ENCODE measurements at regions of chr3 and their contacts with region 1.

Region 1: GRCh38 chr3:76131396-76132153 is 346.2 kb upstream of the ZNF717 start:
- DNase-seq: peak; percentile 51
- ATAC-seq: peak; percentile 64
- H3K4me3 ChIP-seq: no peak overlapping the region
- H3K27ac ChIP-seq: no peak overlapping the region
- H3K4me1 ChIP-seq: no peaks in the 10 kb centered on the region
- H3K27me3 ChIP-seq: no peaks in the 10 kb centered on the region
- CTCF ChIP-seq: no peak
- POLR2A ChIP-seq: no peak
- RAD21 ChIP-seq: no peak

Region 2: DNA sequence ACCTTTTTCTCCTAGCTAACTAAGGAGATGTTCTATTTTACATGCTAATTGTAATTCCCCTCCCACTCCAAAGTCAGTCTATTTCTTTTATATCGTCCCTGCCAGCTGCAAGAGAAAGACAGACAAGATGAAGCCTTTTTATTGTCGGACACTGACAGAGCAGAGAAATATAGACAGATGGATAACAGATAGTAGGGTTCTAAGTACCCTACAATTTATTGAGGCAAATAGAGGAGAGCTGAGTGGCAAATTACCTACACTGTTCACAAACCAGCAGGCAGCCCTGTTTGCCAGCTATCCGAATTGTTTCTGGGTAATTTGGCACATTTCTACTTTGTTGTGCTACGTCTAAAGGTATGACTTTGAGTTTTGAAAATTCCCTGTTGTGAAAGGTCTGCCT is 46.0 kb after region 1 on chr3:
- CTCF ChIA-PET with region 1: no interaction called
- POLR2A ChIA-PET with region 1: no interaction called
- dilution Hi-C with region 1: no loop called
- in situ Hi-C with region 1: no loop called
- intact Hi-C with region 1: no loop called
- DNase-seq: no peak
- ATAC-seq: no peak
- H3K4me3 ChIP-seq: no peak overlapping the region
- H3K27ac ChIP-seq: no peak overlapping the region
- H3K4me1 ChIP-seq: no peaks in the 10 kb centered on the region
- H3K27me3 ChIP-seq: no peaks in the 10 kb centered on the region
- CTCF ChIP-seq: no peak
- POLR2A ChIP-seq: no peak
- RAD21 ChIP-seq: no peak

Region 3: DNA sequence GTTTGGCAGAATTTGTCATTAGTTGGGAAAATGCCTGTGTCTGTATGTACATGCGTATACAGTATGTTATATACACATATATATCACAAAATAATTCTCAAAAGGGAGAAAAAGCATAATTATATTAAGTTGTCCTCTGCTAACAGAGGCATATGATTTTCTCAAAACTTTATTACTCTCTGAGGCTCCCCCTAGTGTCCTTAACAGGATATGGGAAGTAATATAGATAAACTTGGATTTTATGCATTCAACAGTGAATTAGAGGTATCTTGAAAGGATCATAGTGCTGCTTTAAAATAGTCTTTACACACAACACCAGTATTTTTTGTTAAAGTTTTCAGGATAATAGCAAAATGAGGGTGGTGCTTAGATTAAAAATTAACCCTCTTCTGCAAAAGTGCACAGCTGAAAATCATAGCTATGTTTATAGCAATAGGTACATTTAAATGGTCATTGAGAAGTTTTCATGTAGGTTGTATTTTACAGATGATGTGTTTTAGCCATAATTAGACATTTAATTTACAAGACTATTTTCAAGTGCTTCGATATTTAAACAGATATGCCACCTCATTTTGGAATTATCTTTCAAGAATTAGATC is 454.3 kb after region 1 on chr3:
- CTCF ChIA-PET with region 1: no interaction called
- POLR2A ChIA-PET with region 1: no interaction called
- dilution Hi-C with region 1: no loop called
- in situ Hi-C with region 1: no loop called
- intact Hi-C with region 1: loop called (anchors 5 kb)
- DNase-seq: peak; percentile 32
- ATAC-seq: peak; percentile 75
- H3K4me3 ChIP-seq: no peak overlapping the region
- H3K27ac ChIP-seq: no peak overlapping the region
- H3K4me1 ChIP-seq: no peaks in the 10 kb centered on the region
- H3K27me3 ChIP-seq: no peaks in the 10 kb centered on the region
- CTCF ChIP-seq: peak; percentile 63
- POLR2A ChIP-seq: no peak
- RAD21 ChIP-seq: peak; percentile 57

Measured in IMR-90 (cell line).